ENCODE measurements at regions of chr14 and their contacts with region 1.

Region 1: DNA sequence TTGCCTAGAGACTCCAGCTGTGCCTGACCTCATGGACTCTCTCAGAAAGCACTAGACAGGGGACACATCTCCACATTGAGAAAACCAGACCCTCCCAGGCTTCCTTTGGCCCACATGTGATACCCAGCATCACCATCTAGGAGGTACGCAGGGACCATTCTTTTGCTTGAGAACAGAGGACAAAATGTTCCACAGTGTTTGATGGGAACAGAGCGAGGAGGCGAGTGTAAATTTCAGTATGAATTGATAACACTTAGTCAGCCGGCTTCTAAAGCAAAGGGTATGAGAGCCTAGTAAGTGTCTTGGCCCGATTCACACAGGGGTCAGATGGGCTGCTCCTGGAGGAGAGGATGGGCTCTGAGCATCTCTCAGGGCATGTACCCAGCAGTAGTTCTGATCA is 1052.4 kb downstream of the BCL11B start:
- DNase-seq: no peak
- ATAC-seq: no peak
- H3K4me3 ChIP-seq: no peak overlapping the region
- H3K4me3 Mint-ChIP-seq: no peak overlapping the region
- H3K27ac ChIP-seq: no peak overlapping the region
- H3K27ac Mint-ChIP-seq: peak overlapping the region; percentile 28
- H3K4me1 ChIP-seq: peaks cover 73% of the 10 kb centered on the region
- H3K4me1 Mint-ChIP-seq: peaks cover 39% of the 10 kb centered on the region
- H3K27me3 ChIP-seq: no peaks in the 10 kb centered on the region
- H3K27me3 Mint-ChIP-seq: no peaks in the 10 kb centered on the region
- CTCF ChIP-seq: no peak

Region 2: GRCh38 chr14:98173305-98173704 is 46.3 kb before region 1 on chr14:
- CTCF ChIA-PET with region 1: no interaction called
- POLR2A ChIA-PET with region 1: interaction called, 5 read pairs
- intact Hi-C with region 1: loop called in 1 of 2 experiments (anchors 5 kb)
- DNase-seq: peak; percentile 39 to 91 (median 77)
- ATAC-seq: peak; percentile 60
- H3K4me3 ChIP-seq: peak overlapping the region; percentile 18 to 28
- H3K4me3 Mint-ChIP-seq: peak overlapping the region; percentile 76
- H3K27ac ChIP-seq: peak overlapping the region; percentile 49 to 76
- H3K27ac Mint-ChIP-seq: peak overlapping the region; percentile 96
- H3K4me1 ChIP-seq: peaks cover 100% of the 10 kb centered on the region
- H3K4me1 Mint-ChIP-seq: peaks cover 99% of the 10 kb centered on the region
- H3K27me3 ChIP-seq: no peaks in the 10 kb centered on the region
- H3K27me3 Mint-ChIP-seq: no peaks in the 10 kb centered on the region
- CTCF ChIP-seq: no peak